ENCODE measurements at regions of chr1 and their contacts with region 1.

Region 1: DNA sequence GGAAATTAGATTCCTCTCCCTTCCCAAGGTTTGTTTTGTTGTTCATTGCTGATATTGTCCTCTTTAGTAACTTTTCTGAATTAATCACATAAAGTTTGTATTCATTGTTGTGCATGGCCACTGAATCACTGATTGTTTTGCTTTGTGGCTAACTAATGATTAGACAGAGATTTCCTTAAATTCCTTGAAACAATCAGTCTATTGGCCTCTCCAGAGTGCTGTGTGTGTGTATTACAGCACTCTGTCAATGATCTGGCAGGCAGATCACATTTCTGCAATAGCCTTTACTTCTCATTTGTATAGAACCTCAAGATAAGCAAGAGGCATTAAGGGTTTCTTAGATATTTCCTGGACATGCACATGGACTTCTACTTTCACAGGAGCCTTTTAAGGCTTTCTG is 78.6 kb downstream of the DUSP10 start:
- DNase-seq: no peak
- ATAC-seq: no peak
- H3K4me3 Mint-ChIP-seq: no peak overlapping the region
- H3K27ac Mint-ChIP-seq: no peak overlapping the region
- H3K4me1 Mint-ChIP-seq: peaks cover 5% of the 10 kb centered on the region
- H3K27me3 Mint-ChIP-seq: no peaks in the 10 kb centered on the region
- CTCF ChIP-seq: no peak

Region 2: GRCh38 chr1:221394011-221394544 is 269.2 kb before region 1 on chr1:
- CTCF ChIA-PET with region 1: no interaction called
- POLR2A ChIA-PET with region 1: interaction called, 10 read pairs
- intact Hi-C with region 1: no loop called
- DNase-seq: no peak
- ATAC-seq: no peak
- H3K4me3 Mint-ChIP-seq: no peak overlapping the region
- H3K27ac Mint-ChIP-seq: no peak overlapping the region
- H3K4me1 Mint-ChIP-seq: no peaks in the 10 kb centered on the region
- H3K27me3 Mint-ChIP-seq: peaks cover 17% of the 10 kb centered on the region
- CTCF ChIP-seq: no peak

Region 3: DNA sequence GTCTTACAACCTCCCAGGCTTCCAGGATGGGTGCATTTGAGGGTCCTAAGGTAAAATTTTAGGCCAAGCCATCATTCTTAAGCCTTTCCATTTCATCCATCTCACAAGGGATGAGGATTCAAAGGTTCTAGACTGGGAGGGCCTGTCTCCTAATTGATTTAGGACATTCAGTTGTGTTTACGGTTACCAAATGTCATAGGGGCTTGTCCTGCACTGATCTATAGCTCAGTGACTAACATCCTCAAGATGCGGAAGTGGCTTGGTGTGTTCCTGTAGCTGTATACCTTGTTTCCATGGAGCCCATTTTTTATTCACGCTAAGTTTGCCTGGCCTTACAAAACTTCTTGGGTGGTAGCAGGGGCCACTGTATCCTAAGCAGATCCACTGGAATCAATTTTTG is 25.8 kb after region 1 on chr1:
- CTCF ChIA-PET with region 1: no interaction called
- POLR2A ChIA-PET with region 1: no interaction called
- intact Hi-C with region 1: no loop called
- DNase-seq: no peak
- ATAC-seq: peak; percentile 37
- H3K4me3 Mint-ChIP-seq: no peak overlapping the region
- H3K27ac Mint-ChIP-seq: no peak overlapping the region
- H3K4me1 Mint-ChIP-seq: no peaks in the 10 kb centered on the region
- H3K27me3 Mint-ChIP-seq: no peaks in the 10 kb centered on the region
- CTCF ChIP-seq: no peak